ENCODE measurements at regions of chr1 and their contacts with region 1.

Region 1: DNA sequence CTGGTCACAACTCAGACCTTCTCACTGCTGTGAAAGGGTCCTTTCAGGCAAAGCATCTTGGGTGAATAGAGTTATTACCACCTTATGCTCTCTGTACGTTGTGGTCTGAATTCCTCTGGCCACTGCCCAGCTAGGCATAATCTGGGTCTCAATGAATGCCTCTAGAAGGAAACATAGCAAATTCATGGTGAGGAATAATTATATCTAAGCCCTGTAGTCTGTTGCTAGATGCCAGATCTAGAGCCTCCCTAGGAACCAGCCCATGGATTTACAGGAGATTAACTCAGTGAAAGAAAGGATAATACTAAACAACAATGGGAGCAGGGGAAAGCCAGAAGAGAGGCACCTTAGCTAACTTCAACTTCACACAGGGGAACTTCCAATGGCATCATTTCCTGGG is 2.4 kb upstream of the COL11A1 start:
- DNase-seq: no peak
- ATAC-seq: no peak
- H3K4me3 ChIP-seq: no peak overlapping the region
- H3K27ac ChIP-seq: no peak overlapping the region
- H3K4me1 ChIP-seq: peaks cover 23% of the 10 kb centered on the region
- H3K27me3 ChIP-seq: no peaks in the 10 kb centered on the region
- CTCF ChIP-seq: no peak
- POLR2A ChIP-seq: no peak

Region 2: DNA sequence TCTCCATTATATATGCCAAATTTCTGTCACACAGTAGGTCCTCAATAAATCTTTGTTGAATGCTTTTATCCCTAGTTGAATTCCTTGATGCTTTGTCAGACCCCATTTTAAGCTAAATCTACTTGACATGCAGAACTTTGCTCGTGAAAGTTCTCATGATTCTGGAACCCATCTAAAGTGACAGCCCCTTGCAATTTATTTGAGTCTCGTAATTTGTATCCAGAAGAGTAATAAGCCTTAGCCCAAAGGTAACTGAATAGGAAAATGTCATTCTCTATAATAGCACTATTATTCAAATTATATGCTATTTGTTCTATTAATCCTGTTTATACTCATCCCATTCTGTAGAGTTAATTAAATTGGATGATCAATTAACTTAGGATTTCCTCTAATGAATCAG is 647.4 kb before region 1 on chr1:
- intact Hi-C with region 1: no loop called
- DNase-seq: no peak
- ATAC-seq: no peak
- H3K4me3 ChIP-seq: no peak overlapping the region
- H3K27ac ChIP-seq: no peak overlapping the region
- H3K4me1 ChIP-seq: no peaks in the 10 kb centered on the region
- H3K27me3 ChIP-seq: no peaks in the 10 kb centered on the region
- CTCF ChIP-seq: no peak
- POLR2A ChIP-seq: no peak

Region 3: GRCh38 chr1:103509250-103509649 is 398.5 kb after region 1 on chr1:
- intact Hi-C with region 1: loop called (anchors 10 kb)
- DNase-seq: no peak
- ATAC-seq: no peak
- H3K4me3 ChIP-seq: no peak overlapping the region
- H3K27ac ChIP-seq: no peak overlapping the region
- H3K4me1 ChIP-seq: peaks cover 7% of the 10 kb centered on the region
- H3K27me3 ChIP-seq: no peaks in the 10 kb centered on the region
- CTCF ChIP-seq: no peak
- POLR2A ChIP-seq: no peak

Measured in body of pancreas (tissue), 4 donors.